WTC11 (cell line): ENCODE measurements at regions of chr1 and their contacts with region 1.

Region 1: GRCh38 chr1:1040004-1040991 is 20.4 kb downstream of the AGRN start:
- DNase-seq: peak; percentile 83
- ATAC-seq: peak; percentile 85
- H3K4me3 Mint-ChIP-seq: peak overlapping the region; percentile 58
- H3K27ac Mint-ChIP-seq: no peak overlapping the region
- H3K4me1 Mint-ChIP-seq: peaks cover 5% of the 10 kb centered on the region
- H3K27me3 Mint-ChIP-seq: peaks cover 41% of the 10 kb centered on the region
- CTCF ChIP-seq: no peak

Region 2: DNA sequence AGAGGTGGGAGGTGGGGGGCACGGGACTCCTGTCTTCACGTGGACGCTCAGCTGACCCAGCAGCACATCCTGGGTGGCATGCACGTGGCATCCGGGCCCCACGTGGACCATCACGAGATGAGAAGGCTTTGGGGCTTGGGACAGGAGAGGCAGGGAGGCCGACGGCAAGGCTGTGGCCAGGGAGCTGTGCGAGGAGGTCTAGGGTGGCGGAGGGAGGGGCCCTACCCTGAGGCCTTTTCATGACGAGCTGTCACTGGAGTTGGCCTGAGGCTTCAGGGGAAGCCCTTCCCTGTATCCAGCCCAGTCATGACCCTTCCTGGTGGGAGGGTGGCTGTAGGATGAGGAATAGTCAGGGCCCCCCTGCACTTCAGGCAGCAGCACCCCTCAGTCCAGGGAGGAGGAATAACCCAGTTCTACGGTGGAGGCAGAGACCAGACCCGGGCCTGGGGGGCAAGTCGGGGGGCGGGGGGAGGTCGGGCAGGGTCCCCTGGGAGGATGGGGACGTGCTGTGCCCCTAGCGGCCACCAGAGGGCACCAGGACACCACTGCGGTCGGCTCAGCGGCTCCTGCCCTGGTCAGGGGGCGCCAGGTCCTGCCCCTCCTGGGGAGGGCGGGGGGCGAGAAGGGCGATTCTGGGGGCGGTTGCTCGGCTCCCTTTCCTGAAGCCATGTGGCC is 56.4 kb before region 1 on chr1:
- CTCF ChIA-PET with region 1: interaction called, 16 read pairs
- POLR2A ChIA-PET with region 1: interaction called, 5 read pairs
- DNase-seq: peak; percentile 85
- ATAC-seq: peak; percentile 92
- H3K4me3 Mint-ChIP-seq: no peak overlapping the region
- H3K27ac Mint-ChIP-seq: no peak overlapping the region
- H3K4me1 Mint-ChIP-seq: no peaks in the 10 kb centered on the region
- H3K27me3 Mint-ChIP-seq: peaks cover 59% of the 10 kb centered on the region
- CTCF ChIP-seq: peak; percentile 98

Region 3: GRCh38 chr1:1013105-1013921 is 27.0 kb before region 1 on chr1 and contains the start of gene ISG15:
- CTCF ChIA-PET with region 1: interaction called, 5 read pairs
- POLR2A ChIA-PET with region 1: interaction called, 10 read pairs
- DNase-seq: peak; percentile 88
- ATAC-seq: peak; percentile 78
- H3K4me3 Mint-ChIP-seq: peak within 1 kb of the TSS; percentile 78
- H3K27ac Mint-ChIP-seq: peak within 1 kb of the TSS; percentile 95
- H3K4me1 Mint-ChIP-seq: peaks cover 29% of the 10 kb centered on the region
- H3K27me3 Mint-ChIP-seq: peaks cover 48% of the 10 kb centered on the region
- CTCF ChIP-seq: no peak
- total RNA-seq, gene ISG15: 29.5 to 38.3 TPM (median 36.1 TPM) in 3 replicates

Region 4: GRCh38 chr1:1019122-1019999 is 20.9 kb before region 1 on chr1:
- CTCF ChIA-PET with region 1: interaction called, 19 read pairs
- POLR2A ChIA-PET with region 1: interaction called, 15 read pairs
- DNase-seq: peak; percentile 78
- ATAC-seq: peak; percentile 79
- H3K4me3 Mint-ChIP-seq: peak overlapping the region; percentile 34
- H3K27ac Mint-ChIP-seq: no peak overlapping the region
- H3K4me1 Mint-ChIP-seq: peaks cover 37% of the 10 kb centered on the region
- H3K27me3 Mint-ChIP-seq: peaks cover 17% of the 10 kb centered on the region
- CTCF ChIP-seq: no peak

Region 5: DNA sequence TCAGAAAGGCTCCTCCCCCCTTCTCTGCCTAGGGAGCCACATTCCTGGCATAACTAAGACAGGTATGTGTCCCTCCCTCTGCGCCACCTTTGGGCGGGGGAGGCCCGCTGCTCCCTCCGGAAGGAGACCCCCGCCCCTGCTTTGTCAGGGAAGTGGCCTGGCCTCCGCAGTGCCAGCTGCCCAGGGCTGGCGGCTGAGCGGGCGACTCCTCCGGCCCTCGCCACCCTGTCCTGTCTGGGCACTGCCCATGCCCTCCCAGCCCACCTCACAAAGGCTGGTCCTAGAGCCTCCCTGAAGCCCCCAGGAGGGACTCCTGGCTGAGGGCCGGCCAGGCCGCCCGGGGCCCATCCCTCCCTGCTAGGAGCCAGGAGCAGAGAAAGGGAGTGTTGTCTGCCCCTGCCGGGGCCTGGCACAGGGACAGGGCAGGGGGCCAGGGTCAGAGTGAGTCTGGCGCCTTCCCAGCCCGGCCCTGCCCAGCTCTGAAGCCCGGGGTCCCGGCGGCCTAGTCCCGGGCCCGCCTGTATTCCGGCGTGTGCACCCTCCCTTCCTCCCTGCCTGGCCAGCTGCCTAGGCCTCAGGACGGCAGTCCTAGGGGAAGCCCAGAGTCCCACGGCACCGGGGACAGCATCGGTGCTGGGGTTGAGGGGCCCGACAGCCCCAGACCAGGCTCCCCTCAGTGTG is 15.4 kb before region 1 on chr1:
- CTCF ChIA-PET with region 1: interaction called, 19 read pairs
- POLR2A ChIA-PET with region 1: interaction called, 15 read pairs
- DNase-seq: peak; percentile 85
- ATAC-seq: peak; percentile 73
- H3K4me3 Mint-ChIP-seq: no peak overlapping the region
- H3K27ac Mint-ChIP-seq: no peak overlapping the region
- H3K4me1 Mint-ChIP-seq: peaks cover 33% of the 10 kb centered on the region
- H3K27me3 Mint-ChIP-seq: no peaks in the 10 kb centered on the region; the same call in 1 of the 2 replicates
- CTCF ChIP-seq: no peak